MCF 10A (cell line): ENCODE measurements at regions of chr16 and their contacts with region 1.

Region 1: GRCh38 chr16:8572919-8573724 is 17.2 kb downstream of the TMEM114 start:
- DNase-seq: peak; percentile 46
- H3K4me3 Mint-ChIP-seq: no peak overlapping the region
- H3K27ac Mint-ChIP-seq: peak overlapping the region; percentile 5
- H3K4me1 Mint-ChIP-seq: peaks cover 5% of the 10 kb centered on the region
- H3K27me3 Mint-ChIP-seq: peaks cover 24% of the 10 kb centered on the region
- CTCF ChIP-seq: peak; percentile 51

Region 2: DNA sequence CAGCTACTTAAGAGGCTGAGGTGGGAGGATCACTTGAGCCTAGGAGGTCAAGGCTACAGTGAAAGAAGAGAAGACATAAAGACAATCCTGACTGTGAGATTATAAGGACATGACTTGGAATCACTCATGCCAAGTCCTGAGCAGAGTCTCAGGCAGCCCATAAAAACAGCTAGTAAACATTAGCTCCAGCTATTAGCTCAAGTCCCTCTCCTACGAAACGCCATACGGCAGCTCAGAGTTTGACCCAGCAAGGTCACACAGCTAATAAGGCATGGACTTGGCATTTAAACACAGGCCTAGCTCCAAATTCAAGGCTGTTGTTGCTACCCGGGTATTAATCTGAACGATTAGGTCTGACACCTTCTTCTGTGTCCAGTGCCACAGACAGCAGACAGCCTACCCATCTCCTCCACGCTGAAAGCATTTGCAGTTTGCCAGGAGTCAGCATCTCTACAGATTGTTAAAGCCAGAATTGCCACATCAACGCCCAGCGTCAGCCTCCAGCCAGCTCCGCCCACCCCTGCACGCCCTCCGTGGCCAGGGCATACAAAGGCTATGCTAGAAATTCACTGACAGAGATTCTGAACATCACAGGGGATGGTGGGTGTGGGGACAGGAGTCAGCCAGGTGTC is 27.1 kb after region 1 on chr16:
- CTCF ChIA-PET with region 1: interaction called, 23 read pairs
- POLR2A ChIA-PET with region 1: no interaction called
- intact Hi-C with region 1: no loop called
- DNase-seq: no peak
- H3K4me3 Mint-ChIP-seq: no peak overlapping the region
- H3K27ac Mint-ChIP-seq: no peak overlapping the region
- H3K4me1 Mint-ChIP-seq: no peaks in the 10 kb centered on the region
- H3K27me3 Mint-ChIP-seq: no peaks in the 10 kb centered on the region
- CTCF ChIP-seq: no peak

Region 3: DNA sequence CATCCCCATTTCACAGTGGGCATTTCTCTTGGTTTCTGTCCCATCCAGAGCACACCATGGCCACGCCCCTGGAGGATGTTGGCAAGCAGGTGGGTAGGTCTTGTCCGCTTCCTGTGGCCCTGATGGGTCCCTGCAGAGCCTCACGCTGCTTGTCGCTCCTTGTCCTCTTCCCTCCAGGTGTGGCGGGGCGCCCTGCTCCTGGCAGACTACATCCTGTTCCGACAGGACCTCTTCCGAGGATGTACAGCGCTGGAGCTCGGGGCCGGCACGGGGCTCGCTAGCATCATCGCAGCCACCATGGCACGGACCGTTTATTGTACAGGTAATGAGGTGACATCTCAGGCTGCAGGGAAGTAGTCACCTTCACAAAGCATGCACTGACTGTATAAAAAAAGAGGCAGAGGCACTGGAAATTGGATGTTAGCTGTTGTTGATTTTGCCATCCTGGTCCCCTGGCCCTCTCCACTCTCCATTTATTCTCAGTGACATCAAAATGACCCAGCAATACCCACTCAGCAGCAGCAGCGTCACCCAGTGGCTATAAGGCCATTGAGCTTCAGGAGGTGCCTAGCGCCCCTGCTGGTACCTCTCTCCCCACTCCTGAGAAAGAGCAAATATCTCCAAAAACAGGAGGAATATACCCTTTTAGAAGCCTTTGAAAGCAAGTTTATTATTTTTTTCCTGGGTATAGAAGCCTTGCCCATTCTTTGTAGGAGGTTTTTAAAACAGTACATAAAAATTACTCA is 62.0 kb after region 1 on chr16:
- CTCF ChIA-PET with region 1: interaction called, 39 read pairs
- POLR2A ChIA-PET with region 1: no interaction called
- intact Hi-C with region 1: loop called (anchors 5 kb)
- DNase-seq: no peak
- H3K4me3 Mint-ChIP-seq: no peak overlapping the region
- H3K27ac Mint-ChIP-seq: no peak overlapping the region
- H3K4me1 Mint-ChIP-seq: no peaks in the 10 kb centered on the region
- H3K27me3 Mint-ChIP-seq: no peaks in the 10 kb centered on the region
- CTCF ChIP-seq: peak; percentile 31

Region 4: DNA sequence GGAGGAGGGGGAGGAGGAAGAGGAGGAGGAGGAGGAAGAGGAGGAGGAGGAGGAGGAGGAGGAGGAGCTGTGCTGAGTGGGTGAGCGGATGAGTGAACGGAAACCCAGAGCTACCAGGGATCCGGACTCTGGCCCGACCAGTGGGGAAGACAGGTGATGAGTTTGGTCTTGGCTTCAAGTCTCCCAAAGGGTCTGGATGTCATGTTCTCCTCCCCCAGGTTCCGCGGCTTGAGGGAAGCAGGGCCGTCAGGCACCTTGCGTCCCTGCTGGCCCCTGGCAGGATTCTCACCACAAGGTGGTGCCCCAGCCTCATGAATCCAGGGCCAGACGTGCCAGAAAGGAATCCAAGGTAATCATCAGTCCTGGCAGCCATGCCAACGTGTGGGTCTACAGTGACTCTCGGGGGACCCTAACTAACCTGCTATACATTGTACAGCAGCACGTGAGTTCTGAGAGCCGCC is 87.7 kb after region 1 on chr16:
- CTCF ChIA-PET with region 1: interaction called, 60 read pairs
- POLR2A ChIA-PET with region 1: no interaction called
- intact Hi-C with region 1: no loop called
- DNase-seq: peak; percentile 75
- H3K4me3 Mint-ChIP-seq: no peak overlapping the region
- H3K27ac Mint-ChIP-seq: no peak overlapping the region
- H3K4me1 Mint-ChIP-seq: no peaks in the 10 kb centered on the region
- H3K27me3 Mint-ChIP-seq: no peaks in the 10 kb centered on the region
- CTCF ChIP-seq: peak; percentile 82

Region 5: DNA sequence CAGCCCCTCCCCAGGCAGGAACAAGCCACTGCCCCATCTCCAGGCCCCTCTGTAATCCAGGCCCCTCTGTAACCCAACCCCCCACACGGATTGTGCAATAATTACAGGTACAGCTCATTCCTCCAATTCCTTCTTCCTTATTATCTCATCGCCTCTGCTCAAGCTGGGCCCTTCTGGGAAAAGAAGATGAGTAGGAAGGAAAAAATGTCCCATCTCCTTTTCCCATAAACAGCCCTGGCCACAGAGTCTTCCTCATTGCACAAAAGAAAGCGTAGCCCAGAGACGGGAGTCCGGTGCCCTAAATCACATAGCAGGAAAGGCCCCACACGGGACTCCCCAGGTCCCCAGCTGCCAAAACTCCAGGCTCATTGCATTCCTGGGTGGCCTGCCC is 305.4 kb after region 1 on chr16:
- CTCF ChIA-PET with region 1: interaction called, 36 read pairs
- POLR2A ChIA-PET with region 1: no interaction called
- intact Hi-C with region 1: no loop called
- DNase-seq: peak; percentile 84
- H3K4me3 Mint-ChIP-seq: no peak overlapping the region
- H3K27ac Mint-ChIP-seq: peak overlapping the region; percentile 25
- H3K4me1 Mint-ChIP-seq: peaks cover 12% of the 10 kb centered on the region
- H3K27me3 Mint-ChIP-seq: no peaks in the 10 kb centered on the region
- CTCF ChIP-seq: no peak